ENCODE measurements at regions of chr3 and their contacts with region 1.

Region 1: DNA sequence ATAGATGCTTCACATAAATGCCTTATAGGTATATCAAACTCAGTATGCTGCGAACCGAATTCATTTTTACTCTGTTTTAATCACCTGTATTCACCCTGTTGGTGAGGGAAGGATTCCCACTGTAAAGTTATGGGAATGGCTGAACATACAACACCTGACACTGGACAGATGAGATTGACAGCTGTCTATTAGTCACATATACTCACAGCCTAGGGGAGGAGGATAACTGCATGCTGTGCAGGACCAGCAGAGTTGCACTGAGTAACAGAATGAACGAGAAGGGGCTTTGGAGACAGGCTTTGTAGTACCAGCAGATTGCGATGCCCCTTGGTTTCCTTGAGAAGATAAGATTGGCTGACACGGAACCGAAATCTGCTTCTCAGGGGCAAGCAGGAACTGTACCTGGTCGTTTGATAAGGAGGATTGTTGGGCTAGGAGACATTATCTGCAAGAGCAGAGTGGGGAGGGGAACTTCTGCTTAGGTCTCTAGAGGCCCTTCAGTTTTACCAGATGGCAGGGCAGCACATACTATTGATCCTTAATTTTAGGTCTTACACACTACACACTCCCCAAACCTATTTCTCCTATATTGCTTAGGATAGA is 43.5 kb upstream of the SLC22A13 start:
- DNase-seq: no peak
- ATAC-seq: no peak
- H3K4me3 ChIP-seq: no peak overlapping the region
- H3K27ac ChIP-seq: no peak overlapping the region
- H3K4me1 ChIP-seq: no peaks in the 10 kb centered on the region
- H3K27me3 ChIP-seq: no peaks in the 10 kb centered on the region
- CTCF ChIP-seq: no peak

Region 2: GRCh38 chr3:38151667-38152275 is 70.4 kb before region 1 on chr3:
- CTCF ChIA-PET with region 1: no interaction called
- POLR2A ChIA-PET with region 1: interaction called, 11 read pairs
- in situ Hi-C with region 1: no loop called
- intact Hi-C with region 1: no loop called
- DNase-seq: no peak
- ATAC-seq: no peak
- H3K4me3 ChIP-seq: no peak overlapping the region
- H3K27ac ChIP-seq: no peak overlapping the region
- H3K4me1 ChIP-seq: no peaks in the 10 kb centered on the region
- H3K27me3 ChIP-seq: no peaks in the 10 kb centered on the region
- CTCF ChIP-seq: no peak

Measured in Panc1 (cell line).